ENCODE measurements at regions of chr21 and their contacts with region 1.

Region 1: DNA sequence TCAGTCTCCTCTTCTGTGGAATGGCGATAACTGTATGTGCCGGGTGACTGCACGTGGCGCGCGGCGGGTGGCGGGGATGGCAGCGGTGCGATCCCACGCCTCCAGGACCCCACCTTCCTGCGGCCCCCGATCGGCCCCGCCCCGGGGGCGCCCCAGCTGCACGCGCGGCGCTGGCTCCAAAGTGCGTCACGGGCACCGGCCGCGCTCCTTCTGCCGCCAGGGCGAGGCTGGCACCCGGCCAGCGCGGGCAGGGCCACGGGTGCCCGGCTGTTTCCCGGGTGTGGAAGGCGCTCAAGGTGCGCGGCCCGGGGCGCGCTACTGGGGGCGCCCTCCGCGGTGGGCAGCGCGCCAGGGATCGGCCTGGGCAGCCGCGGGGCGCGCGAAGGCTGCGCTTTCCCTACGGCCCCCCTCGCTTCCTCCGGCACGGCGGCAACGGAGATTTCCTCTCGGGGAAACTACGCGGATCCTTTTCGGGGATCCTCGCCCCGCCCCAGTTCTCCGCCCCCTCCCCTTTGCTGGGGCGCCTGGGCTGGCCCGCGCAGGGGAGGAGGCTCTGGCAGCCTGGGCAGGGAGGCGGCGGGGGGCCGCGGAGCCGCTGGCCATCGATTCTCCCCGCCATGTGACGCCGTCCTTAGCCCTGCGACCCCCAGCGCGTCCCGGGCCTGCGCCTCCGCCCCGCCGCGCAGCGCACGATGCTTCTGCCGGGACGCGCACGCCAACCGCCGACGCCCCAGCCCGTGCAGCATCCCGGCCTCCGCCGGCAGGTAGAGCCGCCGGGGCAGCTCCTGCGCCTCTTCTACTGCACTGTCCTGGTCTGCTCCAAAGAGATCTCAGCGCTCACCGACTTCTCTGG is at the start of gene EVA1C:
- DNase-seq: peak in 7 of 10 donors; percentile 20 to 78 (median 43)
- H3K4me3 ChIP-seq: peak within 1 kb of the TSS; percentile 61 to 92 (median 81)
- H3K27ac ChIP-seq: peak within 1 kb of the TSS; percentile 86 to 100 (median 99)
- H3K27me3 ChIP-seq: no peaks in the 10 kb centered on the region
- CTCF ChIP-seq: peak in 23 of 56 donors; percentile 1 to 55 (median 24)
- total RNA-seq, gene EVA1C: 15.9 to 52.5 (median 27.2) TPM

Region 2: DNA sequence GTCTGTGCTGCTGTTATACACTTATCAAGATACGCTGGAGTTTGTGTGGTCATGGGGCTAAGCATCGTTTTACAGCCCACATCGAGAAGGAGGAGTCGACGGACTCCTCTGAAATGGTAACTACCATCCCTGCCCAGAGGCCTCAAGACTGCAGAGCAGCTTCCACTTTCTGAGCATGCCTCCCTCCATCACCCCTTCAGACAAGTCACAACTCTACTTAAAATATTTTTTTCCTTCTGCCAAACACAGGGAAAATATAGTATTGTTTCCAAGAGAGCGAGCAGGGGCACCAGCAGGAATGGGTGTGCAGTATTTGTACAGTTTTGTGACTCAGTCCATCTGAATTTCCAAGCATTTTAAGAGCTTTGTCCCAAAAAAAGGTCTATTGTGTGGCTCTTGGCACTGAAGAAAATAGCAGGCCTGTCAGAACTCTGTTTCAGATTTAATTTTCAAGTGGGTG is 14.2 kb after region 1 on chr21:
- intact Hi-C with region 1: loop called in 1 of 2 experiments (anchors 2 kb)
- DNase-seq: peak in 1 of 10 donors; percentile 19
- H3K4me3 ChIP-seq: peak overlapping the region in 30 of 59 donors; percentile 2 to 45 (median 28)
- H3K27ac ChIP-seq: peak overlapping the region in 58 of 59 donors; percentile 14 to 90 (median 83)
- H3K27me3 ChIP-seq: no peaks in the 10 kb centered on the region
- CTCF ChIP-seq: peak in 8 of 56 donors; percentile 9 to 46 (median 14)

Region 3: DNA sequence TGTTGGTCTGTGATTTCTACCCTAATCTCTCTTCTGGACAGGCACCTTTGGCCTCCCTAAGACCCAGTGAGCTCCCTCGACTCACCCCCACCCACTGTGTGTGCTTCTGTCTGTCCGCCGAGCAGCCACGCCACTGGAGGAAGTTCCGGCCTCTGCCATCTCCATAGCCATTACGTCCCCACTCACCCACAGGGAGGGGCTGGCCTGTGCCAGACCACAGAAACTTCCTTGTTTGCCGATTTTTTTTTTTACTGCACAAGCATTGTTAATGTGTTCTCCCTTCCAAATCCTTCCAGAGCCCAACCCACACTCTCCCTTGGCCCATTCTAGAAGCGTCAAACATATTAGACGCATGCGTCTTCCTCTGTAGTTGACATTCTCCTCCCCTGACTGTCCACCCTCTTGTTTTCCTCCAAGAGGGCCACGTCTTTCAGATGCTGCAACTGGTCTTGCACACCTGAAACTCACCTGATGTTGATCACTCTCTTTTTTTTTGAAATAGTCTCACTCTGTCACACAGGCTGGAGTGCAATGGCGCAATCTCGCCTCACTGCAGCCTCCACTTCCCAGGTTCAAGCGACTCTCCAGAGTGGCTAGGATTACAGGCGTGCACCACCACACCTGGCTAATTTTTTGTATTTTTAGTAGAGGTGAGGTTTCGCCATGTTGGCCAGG is 72.5 kb after region 1 on chr21:
- intact Hi-C with region 1: loop called in 1 of 2 experiments (anchors 5 kb)
- DNase-seq: peak in 9 of 10 donors; percentile 47 to 76 (median 61)
- H3K4me3 ChIP-seq: peak overlapping the region in 3 of 59 donors; percentile 7 to 16 (median 9)
- H3K27ac ChIP-seq: peak overlapping the region in 48 of 59 donors; percentile 5 to 84 (median 60)
- H3K27me3 ChIP-seq: no peaks in the 10 kb centered on the region
- CTCF ChIP-seq: peak in 1 of 56 donors; percentile 14

Region 4: GRCh38 chr21:32562426-32562825 is 150.0 kb after region 1 on chr21:
- intact Hi-C with region 1: loop called (anchors 2 to 5 kb)
- DNase-seq: peak in 2 of 10 donors; percentile 12 to 34
- H3K4me3 ChIP-seq: no peak overlapping the region
- H3K27ac ChIP-seq: peak overlapping the region in 10 of 59 donors; percentile 2 to 40 (median 26)
- H3K27me3 ChIP-seq: no peaks in the 10 kb centered on the region
- CTCF ChIP-seq: peak in 48 of 56 donors; percentile 13 to 62 (median 40)

Region 5: GRCh38 chr21:32604464-32604863 is 192.1 kb after region 1 on chr21:
- intact Hi-C with region 1: loop called in 1 of 2 experiments (anchors 2 kb)
- DNase-seq: peak in 1 of 10 donors; percentile 83
- H3K4me3 ChIP-seq: no peak overlapping the region
- H3K27ac ChIP-seq: peak overlapping the region in 26 of 59 donors; percentile 0 to 81 (median 20)
- H3K27me3 ChIP-seq: no peaks in the 10 kb centered on the region
- CTCF ChIP-seq: no peak

Measured in dorsolateral prefrontal cortex (tissue), 120 donors.